Heart left ventricle (tissue), 16 donors: ENCODE measurements at regions of chr12 and their contacts with region 1.

Region 1: DNA sequence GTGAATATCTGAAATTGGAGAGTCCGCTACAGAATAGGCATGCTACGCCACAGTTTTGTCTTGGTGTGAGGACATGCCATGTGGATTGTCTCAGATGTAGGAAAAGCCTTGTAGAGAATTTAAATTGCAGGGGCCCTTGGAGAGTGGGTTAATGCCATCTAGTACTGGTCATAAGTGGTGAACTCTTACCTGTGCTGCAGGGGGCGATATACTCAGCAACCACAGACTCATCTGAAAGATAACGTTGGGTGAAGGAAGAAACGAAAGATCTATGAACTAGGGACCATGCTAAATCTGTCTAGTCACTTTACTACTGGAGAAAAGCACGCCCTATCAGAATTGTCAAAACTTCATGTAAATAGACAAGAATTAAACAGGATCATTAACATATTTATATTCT is 33.7 kb upstream of the A2M start:
- DNase-seq: no peak
- ATAC-seq: no peak
- H3K4me3 ChIP-seq: no peak overlapping the region
- H3K27ac ChIP-seq: no peak overlapping the region
- H3K4me1 ChIP-seq: no peaks in the 10 kb centered on the region
- H3K27me3 ChIP-seq: no peaks in the 10 kb centered on the region
- CTCF ChIP-seq: peak in 1 of 12 donors; percentile 8
- POLR2A ChIP-seq: no peak

Region 2: DNA sequence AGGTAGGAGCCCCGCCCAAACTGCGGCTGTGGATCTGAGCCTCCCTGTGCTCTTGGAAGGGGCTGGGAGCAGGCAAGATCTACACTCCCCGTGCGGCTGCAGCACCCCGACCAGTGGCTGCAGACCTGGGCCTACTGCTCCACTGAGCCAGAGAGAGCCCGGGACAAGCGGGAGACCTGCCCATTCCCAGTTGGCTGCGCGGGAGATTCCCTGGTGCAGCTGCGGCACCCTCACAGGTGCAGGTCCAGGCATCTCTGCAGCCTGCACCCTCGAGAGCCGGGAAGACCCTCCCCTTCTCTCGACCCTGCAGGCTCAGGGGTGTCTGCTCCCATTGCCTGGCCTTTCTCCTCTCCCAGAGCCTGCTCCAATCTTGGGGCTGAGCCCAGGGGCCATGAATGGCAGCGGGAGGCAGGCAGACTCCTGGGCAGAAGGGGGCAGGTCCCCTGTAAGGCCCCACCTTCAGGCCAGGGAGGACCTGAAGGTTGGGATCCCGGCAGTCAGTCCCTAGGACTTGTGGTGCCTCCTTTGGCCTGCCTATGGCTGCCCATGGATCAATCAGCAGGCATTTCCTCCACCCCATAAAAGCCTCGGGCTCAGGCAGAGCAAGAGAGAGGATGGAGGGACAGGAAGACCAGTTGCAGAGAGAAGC is 24.9 kb before region 1 on chr12:
- intact Hi-C with region 1: loop called in 1 of 10 experiments (anchors 1 kb)
- DNase-seq: no peak
- ATAC-seq: peak in 3 of 4 donors; percentile 14 to 41 (median 22)
- H3K4me3 ChIP-seq: peak overlapping the region in 8 of 12 donors; percentile 21 to 55 (median 42)
- H3K27ac ChIP-seq: peak overlapping the region in 11 of 12 donors; percentile 49 to 68 (median 60)
- H3K4me1 ChIP-seq: peaks cover 0 to 34% (median 18%) of the 10 kb centered on the region in 12 donors
- H3K27me3 ChIP-seq: no peaks in the 10 kb centered on the region
- CTCF ChIP-seq: no peak
- POLR2A ChIP-seq: no peak